PC-9 (cell line): ENCODE measurements at regions of chr2 and their contacts with region 1.

Region 1: GRCh38 chr2:102540641-102541281 is 67.7 kb downstream of the SLC9A4 start:
- DNase-seq: peak; percentile 74 to 77
- H3K4me3 ChIP-seq: no peak overlapping the region
- H3K27ac ChIP-seq: peak overlapping the region; percentile 71
- H3K4me1 ChIP-seq: peaks cover 16% of the 10 kb centered on the region
- H3K27me3 ChIP-seq: no peaks in the 10 kb centered on the region
- CTCF ChIP-seq: no peak

Region 2: DNA sequence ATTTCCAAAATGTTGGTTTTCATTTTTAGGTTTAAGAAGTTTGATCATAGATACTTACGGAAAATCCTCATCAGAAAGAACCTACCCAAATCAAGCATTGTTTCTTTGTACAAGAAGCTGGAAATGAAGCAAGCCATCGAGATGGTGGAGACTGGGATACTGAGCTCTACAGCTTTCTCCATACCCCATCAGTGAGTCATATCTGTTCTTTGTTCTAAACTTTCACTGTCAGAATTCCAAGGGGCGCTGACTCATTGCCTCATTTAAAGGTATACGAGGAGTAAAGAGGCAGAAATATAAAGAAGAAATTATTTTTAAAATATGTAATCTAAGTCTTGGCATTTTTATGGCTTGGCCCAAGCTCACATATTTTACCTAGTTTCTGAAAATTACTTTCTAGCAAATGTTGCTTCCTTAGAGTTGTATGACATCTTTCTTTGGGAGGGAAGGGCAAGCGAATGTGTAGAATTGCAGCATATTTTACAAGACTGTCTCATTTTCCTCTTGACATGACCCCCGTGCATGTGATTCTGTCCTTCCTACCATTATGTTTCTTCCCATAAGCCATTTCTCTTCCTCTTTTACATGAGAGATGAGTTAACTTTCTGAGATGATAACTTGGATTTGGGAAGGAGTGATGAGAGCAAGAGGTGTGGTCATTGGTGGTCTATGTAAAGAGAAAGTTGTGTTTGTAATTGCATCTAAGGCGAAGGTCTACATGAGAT is 26.5 kb before region 1 on chr2:
- CTCF ChIA-PET with region 1: no interaction called
- POLR2A ChIA-PET with region 1: no interaction called
- intact Hi-C with region 1: loop called (anchors 5 kb)
- DNase-seq: peak; percentile 63 to 93
- H3K4me3 ChIP-seq: 0 out of 2 replicates have a peak overlapping the region, but pooled peaks have one; percentile 30
- H3K27ac ChIP-seq: peak overlapping the region; percentile 76
- H3K4me1 ChIP-seq: peaks cover 33% of the 10 kb centered on the region
- H3K27me3 ChIP-seq: no peaks in the 10 kb centered on the region
- CTCF ChIP-seq: no peak

Region 3: DNA sequence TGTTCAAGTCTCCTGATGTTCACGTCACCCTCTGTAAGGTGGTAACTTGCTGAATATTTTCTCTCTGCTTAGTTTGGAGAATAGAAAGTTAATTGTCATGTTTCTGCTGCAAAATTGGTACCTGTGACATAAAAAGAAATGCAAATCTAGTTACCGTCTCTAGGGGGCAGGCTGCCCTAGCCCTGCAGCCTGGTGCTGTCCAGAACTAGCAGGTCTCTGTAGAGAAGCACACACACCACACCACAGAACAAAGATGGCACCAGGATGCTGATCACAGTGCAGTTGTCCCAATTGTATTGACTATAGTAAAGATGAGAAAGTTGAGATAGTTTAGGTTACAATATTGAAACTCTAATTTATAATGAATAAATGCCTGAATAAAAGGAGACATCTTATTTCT is 20.7 kb before region 1 on chr2:
- CTCF ChIA-PET with region 1: no interaction called
- POLR2A ChIA-PET with region 1: interaction called, 10 read pairs
- intact Hi-C with region 1: no loop called
- DNase-seq: no peak
- H3K4me3 ChIP-seq: no peak overlapping the region
- H3K27ac ChIP-seq: no peak overlapping the region
- H3K4me1 ChIP-seq: peaks cover 22% of the 10 kb centered on the region
- H3K27me3 ChIP-seq: no peaks in the 10 kb centered on the region
- CTCF ChIP-seq: peak; percentile 63

Region 4: GRCh38 chr2:102585847-102586431 is 45.2 kb after region 1 on chr2:
- CTCF ChIA-PET with region 1: no interaction called
- POLR2A ChIA-PET with region 1: no interaction called
- intact Hi-C with region 1: loop called (anchors 5 kb)
- DNase-seq: peak; percentile 62 to 81
- H3K4me3 ChIP-seq: no peak overlapping the region
- H3K27ac ChIP-seq: peak overlapping the region; percentile 4; the same call in 1 of the 2 replicates
- H3K4me1 ChIP-seq: peaks cover 20% of the 10 kb centered on the region
- H3K27me3 ChIP-seq: no peaks in the 10 kb centered on the region
- CTCF ChIP-seq: no peak